CD8-positive, alpha-beta memory T cell (primary cell): ENCODE measurements at regions of chr10 and their contacts with region 1.

Region 1: DNA sequence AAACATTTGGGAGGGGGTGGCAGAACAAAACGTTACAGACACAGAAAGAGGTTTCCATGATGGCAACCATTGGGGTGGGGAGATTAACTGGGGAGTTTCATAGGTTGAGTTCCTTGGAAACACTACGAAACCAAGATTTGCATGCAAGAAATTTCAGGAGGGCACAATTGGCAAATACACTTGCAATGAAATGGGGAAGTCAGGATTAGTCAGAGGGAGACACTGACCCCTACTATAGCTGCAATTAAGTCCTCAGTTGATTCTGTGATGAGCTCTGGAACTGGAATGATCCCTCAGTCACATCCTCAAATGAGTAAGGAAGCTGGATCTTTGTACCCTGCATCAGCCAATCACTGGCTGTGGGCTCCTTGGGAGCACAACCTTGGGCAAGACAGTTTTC is 22.1 kb downstream of the CPEB3 start:
- DNase-seq: no peak
- H3K4me3 ChIP-seq: no peak overlapping the region
- H3K4me3 Mint-ChIP-seq: no peak overlapping the region
- H3K27ac ChIP-seq: no peak overlapping the region
- H3K27ac Mint-ChIP-seq: no peak overlapping the region
- H3K4me1 ChIP-seq: no peaks in the 10 kb centered on the region
- H3K4me1 Mint-ChIP-seq: peaks cover 3 to 4% (median 4%) of the 10 kb centered on the region in 3 donors
- H3K27me3 ChIP-seq: no peaks in the 10 kb centered on the region
- H3K27me3 Mint-ChIP-seq: no peaks in the 10 kb centered on the region

Region 2: GRCh38 chr10:92184977-92185376 is 83.8 kb before region 1 on chr10:
- CTCF ChIA-PET with region 1: no interaction called
- POLR2A ChIA-PET with region 1: interaction called, 10 read pairs
- DNase-seq: no peak
- H3K4me3 ChIP-seq: no peak overlapping the region
- H3K4me3 Mint-ChIP-seq: no peak overlapping the region
- H3K27ac ChIP-seq: no peak overlapping the region
- H3K27ac Mint-ChIP-seq: no peak overlapping the region
- H3K4me1 ChIP-seq: no peaks in the 10 kb centered on the region
- H3K4me1 Mint-ChIP-seq: no peaks in the 10 kb centered on the region
- H3K27me3 ChIP-seq: no peaks in the 10 kb centered on the region
- H3K27me3 Mint-ChIP-seq: no peaks in the 10 kb centered on the region

Region 3: GRCh38 chr10:92387289-92387940 is 118.7 kb after region 1 on chr10:
- CTCF ChIA-PET with region 1: no interaction called
- POLR2A ChIA-PET with region 1: no interaction called
- DNase-seq: no peak
- H3K4me3 ChIP-seq: no peak overlapping the region
- H3K4me3 Mint-ChIP-seq: no peak overlapping the region
- H3K27ac ChIP-seq: no peak overlapping the region
- H3K27ac Mint-ChIP-seq: no peak overlapping the region
- H3K4me1 ChIP-seq: no peaks in the 10 kb centered on the region
- H3K4me1 Mint-ChIP-seq: no peaks in the 10 kb centered on the region
- H3K27me3 ChIP-seq: no peaks in the 10 kb centered on the region
- H3K27me3 Mint-ChIP-seq: peaks cover 4 to 32% of the 10 kb centered on the region in 2 donors